ENCODE measurements at regions of chr10 and their contacts with region 1.

Region 1: GRCh38 chr10:119872860-119873681 is 428 bp upstream of the MCMBP start:
- DNase-seq: peak; percentile 90 to 96 (median 93)
- ATAC-seq: peak; percentile 93 to 98 (median 98)
- H3K4me3 ChIP-seq: peak overlapping the region; percentile 70 to 95 (median 82)
- H3K27ac ChIP-seq: peak overlapping the region; percentile 80 to 98 (median 93)
- H3K4me1 ChIP-seq: peaks cover 4 to 45% (median 20%) of the 10 kb centered on the region in 12 donors
- H3K27me3 ChIP-seq: no peaks in the 10 kb centered on the region
- CTCF ChIP-seq: peak in 1 of 12 donors; percentile 3
- POLR2A ChIP-seq: peak in 1 of 2 donors; percentile 71

Region 2: GRCh38 chr10:119596537-119597404 is 276.3 kb before region 1 on chr10 and contains the start of gene TIAL1:
- intact Hi-C with region 1: loop called in 3 of 10 experiments (anchors 5 to 10 kb)
- DNase-seq: peak; percentile 97 to 99 (median 98)
- ATAC-seq: peak; percentile 94 to 97 (median 96)
- H3K4me3 ChIP-seq: peak within 1 kb of the TSS; percentile 66 to 91 (median 88)
- H3K27ac ChIP-seq: peak within 1 kb of the TSS; percentile 94 to 100 (median 99)
- H3K4me1 ChIP-seq: peaks cover 0 to 49% (median 43%) of the 10 kb centered on the region in 12 donors
- H3K27me3 ChIP-seq: no peaks in the 10 kb centered on the region
- CTCF ChIP-seq: no peak
- POLR2A ChIP-seq: peak; percentile 40 to 79
- total RNA-seq, gene TIAL1: 36.9 to 86.3 (median 67.3) TPM

Region 3: GRCh38 chr10:119892188-119893065 is 19.4 kb after region 1 on chr10 and contains the start of gene SEC23IP:
- intact Hi-C with region 1: loop called in 6 of 10 experiments (anchors 1 kb)
- DNase-seq: peak; percentile 97 to 98 (median 98)
- ATAC-seq: peak; percentile 99 to 100 (median 99)
- H3K4me3 ChIP-seq: peak within 1 kb of the TSS; percentile 74 to 97 (median 89)
- H3K27ac ChIP-seq: peak within 1 kb of the TSS; percentile 65 to 95 (median 86)
- H3K4me1 ChIP-seq: peaks cover 3 to 64% (median 37%) of the 10 kb centered on the region in 12 donors
- H3K27me3 ChIP-seq: no peaks in the 10 kb centered on the region
- CTCF ChIP-seq: no peak
- POLR2A ChIP-seq: peak in 1 of 2 donors; percentile 75
- total RNA-seq, gene SEC23IP: 10.9 to 42.0 (median 28.0) TPM

Region 4: DNA sequence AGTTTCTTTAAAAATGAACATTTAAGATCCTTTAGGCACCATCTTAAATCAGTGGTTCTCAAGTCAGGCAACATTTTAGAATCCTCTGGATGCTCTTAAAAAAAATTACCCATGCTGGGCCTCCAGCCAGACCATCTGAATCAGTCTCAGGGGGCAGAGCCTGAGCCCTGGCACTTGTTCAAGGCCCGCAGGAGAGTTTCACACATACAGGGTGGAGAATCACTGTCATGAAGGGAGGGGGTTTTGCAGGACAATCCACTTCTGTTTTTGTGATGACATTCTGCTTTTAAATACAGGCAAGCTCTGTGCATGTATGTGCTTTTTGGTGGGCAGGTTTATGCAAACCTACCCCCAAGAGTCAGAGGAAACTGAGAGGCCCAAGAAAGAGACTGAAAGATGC is 288.0 kb after region 1 on chr10:
- intact Hi-C with region 1: no loop called
- DNase-seq: no peak
- ATAC-seq: no peak
- H3K4me3 ChIP-seq: no peak overlapping the region
- H3K27ac ChIP-seq: no peak overlapping the region
- H3K4me1 ChIP-seq: no peaks in the 10 kb centered on the region
- H3K27me3 ChIP-seq: no peaks in the 10 kb centered on the region
- CTCF ChIP-seq: no peak
- POLR2A ChIP-seq: no peak